GM18951 (cell line): ENCODE measurements at regions of chr2 and their contacts with region 1.

Region 1: GRCh38 chr2:68726608-68727367 is 7.8 kb upstream of the ARHGAP25 start:
- POLR2A ChIP-seq: no peak

Region 2: DNA sequence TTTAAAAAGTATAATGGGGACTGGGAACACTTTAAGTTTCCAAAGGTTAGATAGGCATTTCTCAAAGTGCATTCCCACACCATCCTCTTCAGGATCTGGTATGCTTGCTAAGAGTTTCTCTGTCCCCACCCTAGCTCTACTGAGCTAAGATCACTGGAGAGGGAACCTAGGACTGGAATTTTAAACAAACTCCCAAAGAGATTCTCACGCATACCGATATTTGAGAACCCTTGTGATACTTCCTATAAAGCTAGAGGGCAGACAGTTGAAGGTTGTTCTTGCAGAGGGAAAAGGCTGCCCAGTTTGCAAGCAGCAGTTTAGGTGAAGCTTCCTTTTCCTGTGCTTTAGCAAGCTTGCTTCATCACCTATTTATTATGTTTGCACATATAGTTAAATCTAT is 410.7 kb before region 1 on chr2:
- in situ Hi-C with region 1: no loop called
- POLR2A ChIP-seq: no peak

Region 3: GRCh38 chr2:68909793-68910674 is 183.2 kb after region 1 on chr2:
- in situ Hi-C with region 1: loop called (anchors 25 kb)
- POLR2A ChIP-seq: no peak